ENCODE measurements at regions of chr1 and their contacts with region 1.

Region 1: DNA sequence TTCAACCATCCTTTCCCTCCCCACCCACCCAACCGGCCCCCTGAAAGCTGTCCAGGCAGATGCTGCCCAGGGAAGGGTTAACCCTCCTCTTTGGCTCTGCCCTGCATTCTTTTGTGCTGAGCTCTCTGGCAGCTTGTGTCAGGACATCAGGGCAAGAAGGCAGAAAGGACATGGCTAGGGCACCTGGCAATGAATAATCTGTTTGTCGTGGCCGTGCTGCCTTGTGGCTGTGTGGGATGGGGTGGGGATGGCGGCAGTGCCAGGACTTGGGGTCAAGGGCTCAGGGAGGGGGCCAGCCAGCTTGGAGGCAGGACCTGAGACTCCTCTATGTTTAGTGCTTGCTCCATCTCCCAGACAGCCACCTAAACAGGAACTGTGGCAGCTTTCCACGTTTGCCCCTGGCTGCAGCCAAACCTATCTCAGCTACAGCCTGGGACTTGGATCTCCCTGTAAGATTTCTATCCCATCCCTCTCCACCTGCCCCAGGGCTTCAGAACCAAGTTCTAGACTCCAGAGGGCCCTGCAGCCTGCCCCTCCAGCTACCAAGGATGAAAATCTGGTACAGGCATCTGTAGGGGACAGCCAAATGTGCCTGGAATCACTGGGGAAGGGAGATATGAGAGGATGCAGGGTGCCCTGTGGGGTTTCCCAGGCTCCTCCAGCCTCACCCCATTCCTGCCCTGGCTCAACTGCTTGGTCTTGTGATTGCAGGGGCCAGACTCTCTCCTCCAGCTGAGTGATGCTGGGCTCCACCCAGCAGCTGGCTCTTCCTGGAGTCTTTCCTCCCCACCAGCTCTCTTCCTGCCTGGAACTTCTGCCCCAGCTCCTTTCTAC is 9.7 kb upstream of the GPR37L1 start:
- DNase-seq: peak; percentile 64
- H3K4me3 ChIP-seq: no peak overlapping the region
- H3K27ac ChIP-seq: peak overlapping the region; percentile 32
- H3K4me1 ChIP-seq: peaks cover 20% of the 10 kb centered on the region
- H3K27me3 ChIP-seq: no peaks in the 10 kb centered on the region
- CTCF ChIP-seq: no peak

Region 2: DNA sequence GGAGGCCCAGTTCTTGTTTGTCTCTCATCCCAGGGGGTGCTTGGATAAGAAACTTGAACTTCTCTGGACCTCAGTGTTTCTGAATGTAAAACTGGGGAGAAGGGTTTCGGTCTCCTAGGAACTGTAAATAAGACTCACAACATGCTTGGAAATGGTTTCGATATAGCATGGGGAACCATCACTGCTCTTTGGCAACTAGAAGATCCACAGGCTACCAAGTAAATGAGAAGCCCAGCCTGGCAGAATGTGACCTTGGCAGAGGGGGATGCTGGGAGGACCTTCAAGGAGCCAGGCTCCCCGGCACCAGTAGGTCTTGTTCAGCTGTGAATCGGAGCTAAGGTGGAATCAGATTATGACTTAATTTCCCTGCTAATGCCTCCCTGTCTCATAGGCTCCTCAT is 27.8 kb after region 1 on chr1:
- CTCF ChIA-PET with region 1: no interaction called
- dilution Hi-C with region 1: no loop called
- in situ Hi-C with region 1: no loop called
- intact Hi-C with region 1: loop called (anchors 1 kb)
- DNase-seq: no peak
- H3K4me3 ChIP-seq: no peak overlapping the region
- H3K27ac ChIP-seq: no peak overlapping the region
- H3K4me1 ChIP-seq: peaks cover 18% of the 10 kb centered on the region
- H3K27me3 ChIP-seq: no peaks in the 10 kb centered on the region
- CTCF ChIP-seq: no peak